Motor neuron (in vitro differentiated cells): ENCODE measurements at regions of chr5 and their contacts with region 1.

Region 1: DNA sequence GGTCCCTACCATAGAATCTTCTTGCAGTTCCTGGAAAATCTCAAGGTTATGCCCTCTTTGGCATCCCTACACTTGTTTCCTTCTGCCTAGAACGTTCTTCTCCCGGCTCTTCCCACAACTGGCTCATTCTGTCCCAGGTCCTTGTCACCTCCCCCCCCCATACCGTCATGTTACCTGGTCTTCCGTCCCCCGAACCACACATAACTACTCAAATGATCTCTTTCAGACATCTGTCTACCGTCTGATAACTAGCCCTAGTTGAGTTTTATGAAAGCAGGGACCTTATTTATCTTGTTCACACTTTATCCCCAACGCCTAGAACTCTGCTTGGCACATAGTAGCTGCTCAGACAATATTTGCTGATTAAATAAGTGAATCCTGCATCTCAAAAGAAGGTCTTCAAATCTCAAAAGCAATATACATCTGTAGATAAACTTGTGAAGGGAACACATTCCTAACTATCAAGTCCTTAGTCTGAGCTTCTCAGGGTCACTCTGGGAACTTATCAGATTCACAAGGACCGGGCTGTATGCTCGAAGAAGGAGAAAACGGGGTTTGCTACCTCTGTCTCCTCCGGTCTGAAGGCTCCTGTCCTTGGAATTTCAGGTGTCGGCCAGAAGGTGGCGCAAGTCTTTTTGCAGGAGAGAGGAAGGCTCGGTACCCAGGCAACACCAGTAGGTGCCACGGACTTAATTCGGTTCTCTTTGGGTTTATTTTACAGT is 30.0 kb downstream of the LCP2 start:
- ATAC-seq: peak in 7 of 8 experiments; percentile 30 to 93 (median 47)
- H3K4me3 ChIP-seq: no peak overlapping the region
- H3K27ac ChIP-seq: no peak overlapping the region
- H3K4me1 ChIP-seq: peaks cover 34% of the 10 kb centered on the region in 2 donors

Region 2: DNA sequence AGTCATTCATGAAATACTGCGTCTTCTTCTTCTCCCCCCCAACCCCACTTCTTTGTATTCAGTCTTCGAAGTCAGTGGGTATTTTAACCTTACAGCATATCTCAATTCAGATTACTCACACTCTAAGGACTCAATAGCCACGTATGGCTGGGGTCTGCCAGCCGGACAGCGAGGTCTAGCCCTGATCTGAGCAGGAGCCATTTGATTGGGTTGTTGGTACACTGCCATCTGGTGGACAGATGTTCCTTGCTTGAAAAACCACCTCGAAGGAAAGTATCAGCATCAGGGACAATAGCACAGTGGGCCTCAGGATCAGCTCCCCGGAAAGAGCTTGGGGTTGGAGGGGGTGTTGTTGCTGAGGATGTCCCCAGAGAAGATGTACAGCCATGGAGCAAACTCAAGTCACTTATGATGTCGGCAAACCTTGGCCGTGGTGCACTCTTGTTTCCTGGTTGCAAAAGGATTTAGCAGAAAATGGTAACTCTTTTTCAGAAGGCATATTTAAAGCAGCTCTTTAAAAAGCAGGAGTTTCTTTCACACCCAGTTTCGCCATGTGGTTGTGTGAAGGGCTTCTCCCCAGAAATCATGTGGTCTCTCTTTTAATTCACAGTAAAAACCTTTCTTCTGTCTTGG is 153.3 kb after region 1 on chr5:
- in situ Hi-C with region 1: loop called in 2 of 9 experiments (anchors 10 to 25 kb)
- ATAC-seq: peak; percentile 57 to 78 (median 72)
- H3K4me3 ChIP-seq: no peak overlapping the region
- H3K27ac ChIP-seq: peak overlapping the region in 1 of 2 donors; percentile 65
- H3K4me1 ChIP-seq: peaks cover 39 to 44% of the 10 kb centered on the region in 2 donors

Region 3: GRCh38 chr5:170603578-170604565 is 336.3 kb after region 1 on chr5:
- in situ Hi-C with region 1: loop called in 1 of 9 experiments (anchors 25 kb)
- ATAC-seq: peak; percentile 67 to 99 (median 81)
- H3K4me3 ChIP-seq: no peak overlapping the region
- H3K27ac ChIP-seq: no peak overlapping the region
- H3K4me1 ChIP-seq: peaks cover 34 to 49% of the 10 kb centered on the region in 2 donors